ENCODE measurements at regions of chr11 and their contacts with region 1.

Region 1: DNA sequence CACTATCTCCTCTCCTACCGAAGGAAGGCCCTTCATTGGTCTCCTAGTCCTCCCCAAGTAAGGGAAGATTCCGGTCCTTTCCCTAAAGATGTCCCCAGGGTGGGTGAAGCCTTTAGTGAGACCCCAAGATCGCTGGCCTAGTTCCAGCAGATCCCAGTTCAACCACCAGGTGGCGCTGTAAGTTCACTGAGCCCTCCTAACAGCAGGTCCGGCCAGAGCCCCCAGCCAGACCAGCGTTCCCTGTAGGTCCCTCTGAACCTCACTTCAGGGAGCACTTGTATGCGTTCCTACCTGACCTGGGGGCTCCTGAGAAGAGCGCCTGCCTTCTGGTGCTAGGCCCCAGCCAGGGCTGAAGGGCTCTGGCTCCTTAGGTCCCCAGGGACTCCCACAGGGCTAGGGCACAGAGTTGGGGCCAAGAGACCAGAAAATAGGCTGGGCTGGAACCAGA is 38.1 kb downstream of the LMO1 start:
- DNase-seq: peak; percentile 94
- H3K4me3 ChIP-seq: no peak overlapping the region
- H3K27ac ChIP-seq: no peak overlapping the region
- H3K4me1 ChIP-seq: peaks cover 7 to 18% (median 15%) of the 10 kb centered on the region in 4 donors
- H3K27me3 ChIP-seq: no peaks in the 10 kb centered on the region
- CTCF ChIP-seq: peak; percentile 87 to 93 (median 90)
- EP300 ChIP-seq: no peak
- POLR2A ChIP-seq: no peak

Region 2: DNA sequence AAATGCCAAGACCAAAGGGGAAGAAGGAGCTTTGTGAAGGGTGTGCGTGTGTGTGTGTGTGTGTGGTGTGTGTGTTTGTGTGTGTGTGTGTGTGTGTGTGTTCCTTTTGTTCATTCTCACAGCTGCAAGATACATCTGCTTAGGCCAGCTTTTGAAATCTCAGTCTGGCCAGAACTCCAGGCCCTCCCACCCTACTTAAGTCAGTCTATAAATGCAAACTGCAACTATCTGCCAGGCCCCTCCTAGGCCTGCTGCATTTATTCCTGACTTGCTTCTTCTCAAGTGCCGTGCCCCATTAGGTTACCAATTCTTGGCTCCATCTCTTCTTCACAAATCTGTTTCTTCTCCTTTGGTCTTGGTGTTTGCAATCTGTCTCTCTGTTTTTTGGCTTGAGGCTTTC is 35.2 kb before region 1 on chr11:
- intact Hi-C with region 1: no loop called
- DNase-seq: no peak
- H3K4me3 ChIP-seq: no peak overlapping the region
- H3K27ac ChIP-seq: no peak overlapping the region
- H3K4me1 ChIP-seq: peaks cover 0 to 7% (median 2%) of the 10 kb centered on the region in 4 donors
- H3K27me3 ChIP-seq: peaks cover 0 to 20% (median 0%) of the 10 kb centered on the region in 4 donors
- CTCF ChIP-seq: no peak
- EP300 ChIP-seq: no peak
- POLR2A ChIP-seq: no peak

Region 3: GRCh38 chr11:8263769-8264410 is 38.3 kb after region 1 on chr11 and contains the start of gene LMO1:
- intact Hi-C with region 1: loop called (anchors 1 kb)
- DNase-seq: no peak
- H3K4me3 ChIP-seq: peak within 1 kb of the TSS; percentile 61 to 72 (median 64)
- H3K27ac ChIP-seq: peak within 1 kb of the TSS in 3 of 4 donors; percentile 27 to 60 (median 45)
- H3K4me1 ChIP-seq: peaks cover 19 to 42% (median 40%) of the 10 kb centered on the region in 4 donors
- H3K27me3 ChIP-seq: peaks cover 0 to 69% (median 23%) of the 10 kb centered on the region in 4 donors
- CTCF ChIP-seq: peak; percentile 70 to 91 (median 84)
- EP300 ChIP-seq: no peak
- POLR2A ChIP-seq: no peak
- total RNA-seq, gene LMO1: 0.50 TPM in 1 of 4 donors, not detected in the others

Region 4: DNA sequence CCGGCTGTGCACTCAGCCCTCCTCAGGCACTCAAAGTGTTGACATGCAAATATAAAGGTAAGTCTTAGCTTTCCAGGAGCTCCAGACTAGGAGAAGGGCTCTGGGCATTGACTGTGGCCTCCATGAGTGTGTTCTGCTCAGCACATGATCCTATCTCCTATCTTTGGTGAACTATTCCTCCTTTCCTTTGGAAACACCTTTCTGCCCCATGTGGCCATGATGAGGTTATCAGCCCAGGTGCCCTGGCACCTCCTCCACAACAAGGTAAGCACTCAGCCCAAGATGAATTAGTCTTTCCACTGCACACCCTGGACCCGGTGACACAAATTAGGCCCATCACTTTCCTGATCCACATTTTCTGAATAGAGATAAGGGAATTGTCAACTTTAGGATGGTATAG is 76.0 kb after region 1 on chr11:
- intact Hi-C with region 1: no loop called
- DNase-seq: no peak
- H3K4me3 ChIP-seq: no peak overlapping the region
- H3K27ac ChIP-seq: no peak overlapping the region
- H3K4me1 ChIP-seq: no peaks in the 10 kb centered on the region
- H3K27me3 ChIP-seq: peaks cover 0 to 3% (median 0%) of the 10 kb centered on the region in 4 donors
- CTCF ChIP-seq: no peak
- EP300 ChIP-seq: no peak
- POLR2A ChIP-seq: no peak

Region 5: GRCh38 chr11:8318336-8318935 is 92.8 kb after region 1 on chr11:
- intact Hi-C with region 1: no loop called
- DNase-seq: no peak
- H3K4me3 ChIP-seq: no peak overlapping the region
- H3K27ac ChIP-seq: no peak overlapping the region
- H3K4me1 ChIP-seq: peaks cover 0 to 8% (median 2%) of the 10 kb centered on the region in 4 donors
- H3K27me3 ChIP-seq: no peaks in the 10 kb centered on the region
- CTCF ChIP-seq: peak in 1 of 3 experiments; percentile 17
- EP300 ChIP-seq: no peak
- POLR2A ChIP-seq: no peak

Region 6: DNA sequence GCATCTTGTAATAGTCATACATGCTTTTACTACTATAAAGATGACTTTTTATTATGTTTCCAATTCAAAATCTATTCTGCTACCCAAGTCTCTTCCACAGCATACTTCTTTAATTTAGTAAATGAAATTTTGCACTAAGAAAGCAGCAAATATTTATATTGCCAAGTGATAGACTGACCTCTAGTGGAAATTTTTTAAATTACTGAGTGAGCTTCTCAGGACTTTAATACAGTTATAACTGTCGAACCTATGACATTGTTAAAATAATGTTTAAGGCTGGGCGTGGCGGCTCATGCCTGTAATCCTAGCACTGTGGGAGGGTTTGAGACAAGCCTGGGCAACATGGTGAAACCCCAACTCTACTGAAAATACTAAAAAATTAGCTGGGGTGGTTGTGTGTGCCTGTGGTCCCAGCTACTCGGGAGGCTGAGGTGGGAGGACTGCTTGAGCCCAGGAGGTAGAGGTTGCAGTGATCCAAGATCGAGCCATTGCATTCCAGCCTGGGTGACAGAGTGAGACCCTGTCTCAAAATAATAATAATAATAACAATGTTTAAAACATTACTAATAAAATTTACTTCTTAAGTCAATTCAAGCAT is 341.1 kb after region 1 on chr11:
- intact Hi-C with region 1: loop called (anchors 5 kb)
- DNase-seq: no peak
- H3K4me3 ChIP-seq: no peak overlapping the region
- H3K27ac ChIP-seq: no peak overlapping the region
- H3K4me1 ChIP-seq: peaks cover 0 to 9% (median 4%) of the 10 kb centered on the region in 4 donors
- H3K27me3 ChIP-seq: no peaks in the 10 kb centered on the region
- CTCF ChIP-seq: peak; percentile 64 to 77 (median 77)
- EP300 ChIP-seq: no peak
- POLR2A ChIP-seq: no peak

Region 7: DNA sequence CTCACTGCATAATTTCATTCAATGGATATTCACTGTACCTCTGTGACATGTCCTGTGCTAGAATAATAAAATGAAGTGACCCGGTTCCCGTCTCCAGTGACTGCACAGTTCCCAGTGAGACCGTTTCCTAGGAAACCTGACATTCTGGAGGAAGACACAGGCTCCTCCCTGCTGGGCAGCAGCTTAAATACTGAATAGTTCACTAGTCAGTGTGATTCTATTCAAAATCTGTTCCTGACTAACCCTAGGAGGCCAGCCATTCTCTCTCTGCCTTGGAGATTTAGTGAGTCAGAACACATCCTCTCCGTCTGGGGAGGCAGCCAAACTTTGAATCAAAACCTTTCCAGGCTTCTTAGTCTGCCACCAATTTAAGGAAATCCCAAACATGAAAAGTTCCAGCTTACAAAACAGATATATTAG is 445.6 kb after region 1 on chr11:
- intact Hi-C with region 1: no loop called
- DNase-seq: no peak
- H3K4me3 ChIP-seq: no peak overlapping the region
- H3K27ac ChIP-seq: peak overlapping the region; percentile 75 to 85 (median 82)
- H3K4me1 ChIP-seq: peaks cover 16 to 22% (median 21%) of the 10 kb centered on the region in 4 donors
- H3K27me3 ChIP-seq: no peaks in the 10 kb centered on the region
- CTCF ChIP-seq: no peak
- EP300 ChIP-seq: no peak
- POLR2A ChIP-seq: no peak